Heart left ventricle (tissue), 16 donors: ENCODE measurements at regions of chr7 and their contacts with region 1.

Region 1: GRCh38 chr7:47827351-47827756 is 120.9 kb downstream of the PKD1L1 start:
- DNase-seq: peak in 1 of 5 donors; percentile 42
- ATAC-seq: peak; percentile 27 to 73 (median 66)
- H3K4me3 ChIP-seq: no peak overlapping the region
- H3K27ac ChIP-seq: no peak overlapping the region
- H3K4me1 ChIP-seq: peaks cover 0 to 14% (median 1%) of the 10 kb centered on the region in 12 donors
- H3K27me3 ChIP-seq: no peaks in the 10 kb centered on the region
- CTCF ChIP-seq: no peak
- POLR2A ChIP-seq: no peak

Region 2: GRCh38 chr7:47806701-47807103 is 20.7 kb before region 1 on chr7:
- intact Hi-C with region 1: loop called in 1 of 10 experiments (anchors 1 kb)
- DNase-seq: peak in 2 of 5 donors; percentile 35 to 46
- ATAC-seq: peak; percentile 73 to 89 (median 80)
- H3K4me3 ChIP-seq: no peak overlapping the region
- H3K27ac ChIP-seq: peak overlapping the region in 2 of 12 donors; percentile 21 to 73
- H3K4me1 ChIP-seq: peaks cover 0 to 36% (median 5%) of the 10 kb centered on the region in 12 donors
- H3K27me3 ChIP-seq: no peaks in the 10 kb centered on the region
- CTCF ChIP-seq: no peak
- POLR2A ChIP-seq: no peak

Region 3: GRCh38 chr7:48307041-48307714 is 479.8 kb after region 1 on chr7:
- intact Hi-C with region 1: no loop called
- DNase-seq: no peak
- ATAC-seq: no peak
- H3K4me3 ChIP-seq: no peak overlapping the region
- H3K27ac ChIP-seq: no peak overlapping the region
- H3K4me1 ChIP-seq: no peaks in the 10 kb centered on the region
- H3K27me3 ChIP-seq: peaks cover 0 to 9% (median 0%) of the 10 kb centered on the region in 9 donors
- CTCF ChIP-seq: no peak
- POLR2A ChIP-seq: no peak